ENCODE measurements at regions of chr7 and their contacts with region 1.

Region 1: GRCh38 chr7:92751902-92752901 is 84.2 kb downstream of the CDK6 start:
- DNase-seq: no peak
- H3K4me3 Mint-ChIP-seq: no peak overlapping the region
- H3K27ac Mint-ChIP-seq: no peak overlapping the region
- H3K4me1 Mint-ChIP-seq: peaks cover 68% of the 10 kb centered on the region
- H3K27me3 Mint-ChIP-seq: no peaks in the 10 kb centered on the region

Region 2: GRCh38 chr7:92740700-92741126 is 11.5 kb before region 1 on chr7:
- CTCF ChIA-PET with region 1: interaction called, 3 read pairs
- intact Hi-C with region 1: loop called (anchors 1 kb)
- DNase-seq: no peak
- H3K4me3 Mint-ChIP-seq: no peak overlapping the region
- H3K27ac Mint-ChIP-seq: peak overlapping the region; percentile 48
- H3K4me1 Mint-ChIP-seq: peaks cover 63% of the 10 kb centered on the region
- H3K27me3 Mint-ChIP-seq: no peaks in the 10 kb centered on the region